Activated CD4-positive, alpha-beta memory T cell treated with anti-CD3 and anti-CD28 coated beads for 36 hours (primary cell): ENCODE measurements at regions of chr7 and their contacts with region 1.

Region 1: DNA sequence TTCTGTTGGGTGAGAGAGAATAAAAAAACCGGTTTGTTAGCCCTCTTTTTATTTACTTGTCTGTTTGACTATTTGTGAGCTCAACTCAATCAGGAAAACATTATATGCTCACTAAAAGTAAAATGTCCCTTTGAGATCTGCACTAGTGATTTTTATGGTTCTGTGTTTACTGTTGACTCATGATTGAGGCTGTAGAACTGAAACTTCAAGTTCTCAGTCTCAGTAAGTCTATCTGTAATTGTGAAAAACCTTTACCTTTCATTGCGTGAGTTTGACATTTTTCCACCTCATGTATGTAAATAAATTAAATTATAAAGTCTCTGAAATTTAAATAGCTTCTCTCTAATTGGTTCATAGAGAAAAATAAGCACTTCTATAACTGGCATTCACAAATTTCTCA is 17.0 kb upstream of the CASD1 start:
- DNase-seq: no peak
- H3K4me3 Mint-ChIP-seq: no peak overlapping the region
- H3K27ac Mint-ChIP-seq: no peak overlapping the region
- H3K4me1 Mint-ChIP-seq: peaks cover 9% of the 10 kb centered on the region
- H3K27me3 Mint-ChIP-seq: peaks cover 29% of the 10 kb centered on the region

Region 2: DNA sequence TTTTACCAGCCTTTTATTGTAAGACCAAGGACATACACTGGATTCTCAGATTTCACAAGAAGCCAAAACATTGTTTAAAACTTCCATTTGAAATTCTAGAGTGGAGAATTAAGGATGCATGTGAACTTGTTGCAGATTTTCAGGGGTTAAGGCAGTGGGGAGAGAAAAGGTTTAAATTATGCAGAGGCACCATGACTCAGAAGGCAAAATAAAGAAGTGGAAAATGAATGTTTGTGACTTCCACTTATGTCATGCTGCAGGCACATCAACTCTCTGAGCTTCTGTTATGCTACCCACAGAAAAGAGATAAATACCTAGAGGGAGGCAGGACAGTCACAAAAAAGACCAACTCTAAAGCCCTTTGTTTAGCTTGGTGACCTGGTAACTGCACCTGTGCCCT is 404.0 kb before region 1 on chr7:
- CTCF ChIA-PET with region 1: no interaction called
- POLR2A ChIA-PET with region 1: no interaction called
- intact Hi-C with region 1: no loop called
- DNase-seq: no peak
- H3K4me3 Mint-ChIP-seq: no peak overlapping the region
- H3K27ac Mint-ChIP-seq: no peak overlapping the region
- H3K4me1 Mint-ChIP-seq: peaks cover 6% of the 10 kb centered on the region
- H3K27me3 Mint-ChIP-seq: peaks cover 18% of the 10 kb centered on the region

Region 3: GRCh38 chr7:94313926-94314325 is 178.7 kb before region 1 on chr7:
- CTCF ChIA-PET with region 1: no interaction called
- POLR2A ChIA-PET with region 1: no interaction called
- intact Hi-C with region 1: no loop called
- DNase-seq: no peak
- H3K4me3 Mint-ChIP-seq: no peak overlapping the region
- H3K27ac Mint-ChIP-seq: no peak overlapping the region
- H3K4me1 Mint-ChIP-seq: no peaks in the 10 kb centered on the region
- H3K27me3 Mint-ChIP-seq: no peaks in the 10 kb centered on the region

Region 4: GRCh38 chr7:94472608-94473007 is 20.0 kb before region 1 on chr7:
- CTCF ChIA-PET with region 1: no interaction called
- POLR2A ChIA-PET with region 1: no interaction called
- intact Hi-C with region 1: loop called (anchors 1 kb)
- DNase-seq: no peak
- H3K4me3 Mint-ChIP-seq: no peak overlapping the region
- H3K27ac Mint-ChIP-seq: no peak overlapping the region
- H3K4me1 Mint-ChIP-seq: no peaks in the 10 kb centered on the region
- H3K27me3 Mint-ChIP-seq: peaks cover 12% of the 10 kb centered on the region